ENCODE measurements at regions of chr16 and their contacts with region 1.

Region 1: GRCh38 chr16:48556913-48557351 is 53.0 kb downstream of the N4BP1 start:
- DNase-seq: no peak
- ATAC-seq: peak; percentile 69
- H3K4me3 Mint-ChIP-seq: no peak overlapping the region
- H3K27ac Mint-ChIP-seq: peak overlapping the region; percentile 15
- H3K4me1 Mint-ChIP-seq: peaks cover 40% of the 10 kb centered on the region
- H3K27me3 Mint-ChIP-seq: no peaks in the 10 kb centered on the region
- CTCF ChIP-seq: no peak

Region 2: DNA sequence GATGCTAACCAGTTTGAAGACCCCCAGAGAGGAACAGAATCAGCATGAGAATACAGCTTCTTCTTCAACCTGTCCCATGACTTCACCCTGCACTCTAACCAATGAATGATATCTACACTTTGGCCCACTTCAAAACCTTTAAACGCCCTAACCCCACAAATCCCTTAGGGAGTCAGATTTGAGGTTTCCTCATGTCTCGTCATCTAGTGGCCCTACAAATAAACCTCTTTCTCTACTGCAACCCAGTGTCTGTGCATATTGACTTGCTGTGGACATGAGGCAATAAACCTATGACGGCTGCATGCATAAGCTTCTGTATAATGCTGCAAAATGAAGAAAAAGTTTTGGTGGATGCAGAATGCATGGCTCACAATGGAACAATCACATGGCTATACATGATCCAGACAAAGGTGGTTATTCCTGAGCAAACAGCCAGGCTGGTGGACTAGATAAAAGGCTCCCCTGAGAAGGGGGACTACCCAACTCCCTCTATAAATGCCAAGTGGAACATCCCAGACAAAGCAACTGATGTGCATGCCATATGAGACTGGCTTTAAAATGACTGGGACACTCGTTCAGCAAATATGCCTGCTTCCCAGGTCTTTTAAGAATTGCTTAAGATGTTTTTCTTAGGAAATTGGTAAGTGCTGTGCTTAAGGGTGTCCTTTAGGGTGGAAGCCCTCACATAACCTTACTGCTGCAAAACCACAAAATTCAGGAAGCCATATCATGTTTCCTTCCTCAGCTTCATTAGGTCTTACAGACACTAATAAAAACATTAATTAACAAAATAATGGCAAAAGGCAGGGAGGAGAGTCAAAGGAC is 40.8 kb after region 1 on chr16:
- CTCF ChIA-PET with region 1: no interaction called
- POLR2A ChIA-PET with region 1: no interaction called
- intact Hi-C with region 1: loop called (anchors 2 kb)
- DNase-seq: no peak
- ATAC-seq: peak; percentile 21
- H3K4me3 Mint-ChIP-seq: no peak overlapping the region
- H3K27ac Mint-ChIP-seq: no peak overlapping the region
- H3K4me1 Mint-ChIP-seq: peaks cover 49% of the 10 kb centered on the region
- H3K27me3 Mint-ChIP-seq: no peaks in the 10 kb centered on the region
- CTCF ChIP-seq: no peak